CD4-positive, alpha-beta memory T cell (primary cell): ENCODE measurements at regions of chr4 and their contacts with region 1.

Region 1: GRCh38 chr4:152408514-152409327 is 127.2 kb downstream of the FBXW7 start:
- DNase-seq: peak; percentile 28 to 44 (median 41)
- H3K4me3 ChIP-seq: no peak overlapping the region
- H3K4me3 Mint-ChIP-seq: no peak overlapping the region
- H3K27ac ChIP-seq: no peak overlapping the region
- H3K27ac Mint-ChIP-seq: peak overlapping the region in 5 of 7 donors; percentile 3 to 85 (median 23)
- H3K4me1 ChIP-seq: no peaks in the 10 kb centered on the region
- H3K4me1 Mint-ChIP-seq: peaks cover 18 to 23% (median 20%) of the 10 kb centered on the region in 4 donors
- H3K27me3 ChIP-seq: no peaks in the 10 kb centered on the region
- H3K27me3 Mint-ChIP-seq: no peaks in the 10 kb centered on the region

Region 2: GRCh38 chr4:152398060-152398459 is 10.7 kb before region 1 on chr4:
- CTCF ChIA-PET with region 1: interaction called, 10 read pairs
- POLR2A ChIA-PET with region 1: no interaction called
- intact Hi-C with region 1: no loop called
- DNase-seq: no peak
- H3K4me3 ChIP-seq: no peak overlapping the region
- H3K4me3 Mint-ChIP-seq: no peak overlapping the region
- H3K27ac ChIP-seq: no peak overlapping the region
- H3K27ac Mint-ChIP-seq: peak overlapping the region in 1 of 7 donors; percentile 45
- H3K4me1 ChIP-seq: peaks cover 26% of the 10 kb centered on the region
- H3K4me1 Mint-ChIP-seq: peaks cover 23 to 48% (median 40%) of the 10 kb centered on the region in 4 donors
- H3K27me3 ChIP-seq: no peaks in the 10 kb centered on the region
- H3K27me3 Mint-ChIP-seq: no peaks in the 10 kb centered on the region

Region 3: DNA sequence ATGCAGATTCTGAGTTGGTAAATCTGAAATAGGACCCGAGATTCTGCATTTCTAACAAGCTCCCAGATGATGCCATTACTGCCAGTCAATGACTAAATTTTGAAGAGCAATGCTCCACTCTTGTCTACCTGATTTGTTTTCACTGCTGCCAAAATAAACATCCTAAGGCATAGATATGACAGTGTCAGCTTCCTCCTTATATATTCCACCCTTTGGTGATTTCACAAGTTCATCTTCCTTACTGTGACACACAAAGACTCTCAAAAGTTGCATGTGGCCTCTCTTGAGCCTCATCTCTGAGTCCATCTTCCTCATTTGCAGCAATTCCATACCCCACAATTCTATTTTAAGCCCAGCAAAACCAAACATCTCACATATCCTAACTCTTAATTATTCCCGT is 16.3 kb after region 1 on chr4:
- CTCF ChIA-PET with region 1: interaction called, 13 read pairs
- POLR2A ChIA-PET with region 1: no interaction called
- intact Hi-C with region 1: no loop called
- DNase-seq: no peak
- H3K4me3 ChIP-seq: no peak overlapping the region
- H3K4me3 Mint-ChIP-seq: no peak overlapping the region
- H3K27ac ChIP-seq: no peak overlapping the region
- H3K27ac Mint-ChIP-seq: peak overlapping the region in 1 of 7 donors; percentile 5
- H3K4me1 ChIP-seq: peaks cover 14% of the 10 kb centered on the region
- H3K4me1 Mint-ChIP-seq: peaks cover 30 to 53% (median 43%) of the 10 kb centered on the region in 4 donors
- H3K27me3 ChIP-seq: no peaks in the 10 kb centered on the region
- H3K27me3 Mint-ChIP-seq: no peaks in the 10 kb centered on the region

Region 4: DNA sequence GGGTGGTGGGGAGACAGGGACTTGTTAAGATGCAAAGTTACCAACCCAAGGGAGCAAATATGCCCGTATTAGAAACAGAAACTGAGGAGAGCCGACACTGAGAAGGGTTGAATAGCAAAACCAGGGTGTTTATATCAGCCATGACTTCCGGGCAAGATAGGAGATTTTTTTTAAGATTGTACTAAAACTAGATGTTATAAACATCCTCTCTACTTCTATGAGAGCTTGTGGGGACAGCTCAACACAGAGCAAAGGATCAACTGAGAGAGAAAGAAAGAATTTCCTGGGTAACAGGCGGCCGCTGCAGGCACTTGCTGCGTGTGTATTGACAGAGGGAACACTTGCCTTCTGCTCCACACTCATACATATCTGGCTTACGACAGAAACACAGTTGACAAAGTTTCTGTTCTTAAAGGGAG is 176.3 kb after region 1 on chr4:
- CTCF ChIA-PET with region 1: no interaction called
- POLR2A ChIA-PET with region 1: no interaction called
- intact Hi-C with region 1: no loop called
- DNase-seq: peak in 4 of 5 donors; percentile 29 to 44 (median 36)
- H3K4me3 ChIP-seq: no peak overlapping the region
- H3K4me3 Mint-ChIP-seq: peak overlapping the region; percentile 58 to 86 (median 77)
- H3K27ac ChIP-seq: peak overlapping the region; percentile 41
- H3K27ac Mint-ChIP-seq: peak overlapping the region; percentile 80 to 98 (median 92)
- H3K4me1 ChIP-seq: peaks cover 26% of the 10 kb centered on the region
- H3K4me1 Mint-ChIP-seq: peaks cover 16 to 31% (median 17%) of the 10 kb centered on the region in 4 donors
- H3K27me3 ChIP-seq: no peaks in the 10 kb centered on the region
- H3K27me3 Mint-ChIP-seq: peaks cover 0 to 1% of the 10 kb centered on the region in 2 donors